Mammary epithelial cell (primary cell): ENCODE measurements at regions of chr5 and their contacts with region 1.

Region 1: GRCh38 chr5:159620853-159621540 is 290.7 kb upstream of the IL12B start:
- DNase-seq: peak; percentile 71
- H3K4me3 ChIP-seq: no peak overlapping the region
- H3K27ac ChIP-seq: peak overlapping the region; percentile 4
- H3K4me1 ChIP-seq: peaks cover 26% of the 10 kb centered on the region
- H3K27me3 ChIP-seq: no peaks in the 10 kb centered on the region
- CTCF ChIP-seq: no peak

Region 2: GRCh38 chr5:159050316-159051143 is 570.5 kb before region 1 on chr5:
- CTCF ChIA-PET with region 1: no interaction called
- dilution Hi-C with region 1: no loop called
- in situ Hi-C with region 1: no loop called
- intact Hi-C with region 1: no loop called
- DNase-seq: no peak
- H3K4me3 ChIP-seq: no peak overlapping the region
- H3K27ac ChIP-seq: no peak overlapping the region
- H3K4me1 ChIP-seq: peaks cover 3% of the 10 kb centered on the region
- H3K27me3 ChIP-seq: peaks cover 24% of the 10 kb centered on the region
- CTCF ChIP-seq: no peak

Region 3: DNA sequence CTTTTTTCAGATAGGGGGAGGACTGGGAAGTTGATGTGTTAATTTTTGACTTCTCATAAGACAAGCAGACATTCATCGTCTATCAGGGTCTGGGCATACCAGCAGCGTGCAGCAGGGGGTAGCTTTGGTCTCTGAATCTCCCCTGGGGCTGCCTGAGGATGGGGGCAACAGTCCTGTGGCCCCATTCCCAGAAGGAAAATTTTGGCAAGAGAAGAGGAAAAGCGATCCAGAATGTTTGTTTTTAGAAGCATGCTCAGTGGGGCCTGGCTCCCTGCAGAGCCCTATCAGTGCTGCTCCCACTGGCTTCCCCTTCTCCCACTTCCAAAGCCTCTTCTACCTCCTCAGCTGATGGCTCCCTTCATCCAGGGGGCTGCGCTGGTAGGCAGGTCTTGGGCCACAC is 95.9 kb before region 1 on chr5:
- CTCF ChIA-PET with region 1: no interaction called
- dilution Hi-C with region 1: loop called (anchors 5 kb)
- in situ Hi-C with region 1: no loop called
- intact Hi-C with region 1: no loop called
- DNase-seq: no peak
- H3K4me3 ChIP-seq: no peak overlapping the region
- H3K27ac ChIP-seq: no peak overlapping the region
- H3K4me1 ChIP-seq: no peaks in the 10 kb centered on the region
- H3K27me3 ChIP-seq: no peaks in the 10 kb centered on the region
- CTCF ChIP-seq: no peak

Region 4: GRCh38 chr5:159819591-159820411 is 198.8 kb after region 1 on chr5:
- CTCF ChIA-PET with region 1: no interaction called
- dilution Hi-C with region 1: no loop called
- in situ Hi-C with region 1: no loop called
- intact Hi-C with region 1: no loop called
- DNase-seq: peak; percentile 27
- H3K4me3 ChIP-seq: no peak overlapping the region
- H3K27ac ChIP-seq: no peak overlapping the region
- H3K4me1 ChIP-seq: peaks cover 30% of the 10 kb centered on the region
- H3K27me3 ChIP-seq: no peaks in the 10 kb centered on the region
- CTCF ChIP-seq: no peak